IMR-90 (cell line): ENCODE measurements at regions of chr5 and their contacts with region 1.

Region 1: GRCh38 chr5:76715736-76716455 is at the start of gene F2R:
- DNase-seq: peak; percentile 70
- ATAC-seq: peak; percentile 84
- H3K4me3 ChIP-seq: peak within 1 kb of the TSS; percentile 89
- H3K27ac ChIP-seq: peak within 1 kb of the TSS; percentile 92
- H3K4me1 ChIP-seq: peaks cover 12% of the 10 kb centered on the region
- H3K27me3 ChIP-seq: no peaks in the 10 kb centered on the region
- CTCF ChIP-seq: peak; percentile 62
- POLR2A ChIP-seq: peak; percentile 61
- RAD21 ChIP-seq: peak; percentile 46
- total RNA-seq, gene F2R: 85.7 and 96.7 TPM in 2 replicates

Region 2: DNA sequence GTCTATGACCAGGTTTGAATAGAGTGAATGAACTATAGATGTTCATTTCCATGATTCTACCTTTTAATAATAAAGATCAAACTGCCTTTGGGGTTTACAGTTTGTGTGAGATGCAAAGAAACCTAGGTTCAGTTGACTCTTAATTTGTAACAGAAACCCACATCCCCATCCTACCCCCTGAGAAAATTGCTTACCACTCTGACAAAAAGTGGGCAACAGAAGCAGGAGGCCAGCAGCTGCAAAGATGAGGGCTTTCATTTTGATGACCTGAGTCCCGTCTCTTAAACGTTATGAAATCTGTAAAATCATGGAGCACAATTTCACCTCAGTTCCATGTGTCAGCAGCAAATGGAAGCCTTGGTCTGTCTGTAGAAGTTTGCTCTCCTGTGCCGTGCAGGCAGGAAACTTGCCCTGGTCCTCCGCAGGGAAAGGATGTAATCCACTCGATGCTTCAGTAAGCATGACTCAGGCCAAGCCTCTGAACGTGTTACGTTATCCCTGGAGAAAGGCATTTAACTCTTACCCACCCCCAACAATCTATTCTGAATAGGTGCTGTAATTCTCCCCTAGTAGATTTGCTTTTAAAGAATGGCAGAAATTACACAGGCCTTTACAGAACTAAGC is 92.8 kb before region 1 on chr5 and contains the start of gene F2RL2:
- CTCF ChIA-PET with region 1: no interaction called
- POLR2A ChIA-PET with region 1: no interaction called
- dilution Hi-C with region 1: no loop called
- in situ Hi-C with region 1: no loop called
- intact Hi-C with region 1: loop called (anchors 5 kb)
- DNase-seq: peak; percentile 93
- ATAC-seq: peak; percentile 97
- H3K4me3 ChIP-seq: peak within 1 kb of the TSS; percentile 44
- H3K27ac ChIP-seq: peak within 1 kb of the TSS; percentile 89
- H3K4me1 ChIP-seq: peaks cover 4% of the 10 kb centered on the region; the same call in 1 of the 2 replicates
- H3K27me3 ChIP-seq: no peaks in the 10 kb centered on the region
- CTCF ChIP-seq: no peak
- POLR2A ChIP-seq: peak; percentile 76; the same call in 1 of the 2 replicates
- RAD21 ChIP-seq: no peak
- total RNA-seq, gene F2RL2: 18.1 and 21.7 TPM in 2 replicates

Region 3: GRCh38 chr5:76771705-76772405 is 56.0 kb after region 1 on chr5:
- CTCF ChIA-PET with region 1: interaction called, 5 read pairs
- POLR2A ChIA-PET with region 1: no interaction called
- dilution Hi-C with region 1: no loop called
- in situ Hi-C with region 1: no loop called
- intact Hi-C with region 1: loop called (anchors 1 kb)
- DNase-seq: peak; percentile 51
- ATAC-seq: peak; percentile 63
- H3K4me3 ChIP-seq: no peak overlapping the region
- H3K27ac ChIP-seq: peak overlapping the region; percentile 56; the same call in 1 of the 2 replicates
- H3K4me1 ChIP-seq: peaks cover 8% of the 10 kb centered on the region
- H3K27me3 ChIP-seq: no peaks in the 10 kb centered on the region
- CTCF ChIP-seq: no peak
- POLR2A ChIP-seq: no peak
- RAD21 ChIP-seq: no peak

Region 4: GRCh38 chr5:77015938-77016569 is 300.2 kb after region 1 on chr5:
- CTCF ChIA-PET with region 1: no interaction called
- POLR2A ChIA-PET with region 1: no interaction called
- dilution Hi-C with region 1: no loop called
- in situ Hi-C with region 1: no loop called
- intact Hi-C with region 1: loop called (anchors 5 kb)
- DNase-seq: peak; percentile 69
- ATAC-seq: peak; percentile 64
- H3K4me3 ChIP-seq: no peak overlapping the region
- H3K27ac ChIP-seq: no peak overlapping the region
- H3K4me1 ChIP-seq: no peaks in the 10 kb centered on the region
- H3K27me3 ChIP-seq: peaks cover 7% of the 10 kb centered on the region
- CTCF ChIP-seq: peak; percentile 43
- POLR2A ChIP-seq: no peak
- RAD21 ChIP-seq: peak; percentile 53